Gastrocnemius medialis (tissue), 4 donors: ENCODE measurements at regions of chr11 and their contacts with region 1.

Region 1: GRCh38 chr11:7115780-7116179 is 27.0 kb downstream of the RBMXL2 start:
- DNase-seq: no peak
- ATAC-seq: no peak
- H3K4me3 ChIP-seq: no peak overlapping the region
- H3K27ac ChIP-seq: no peak overlapping the region
- H3K4me1 ChIP-seq: no peaks in the 10 kb centered on the region
- H3K27me3 ChIP-seq: no peaks in the 10 kb centered on the region
- CTCF ChIP-seq: no peak
- POLR2A ChIP-seq: no peak

Region 2: GRCh38 chr11:6855971-6856541 is 259.7 kb before region 1 on chr11:
- in situ Hi-C with region 1: no loop called
- intact Hi-C with region 1: no loop called
- DNase-seq: no peak
- ATAC-seq: no peak
- H3K4me3 ChIP-seq: no peak overlapping the region
- H3K27ac ChIP-seq: no peak overlapping the region
- H3K4me1 ChIP-seq: no peaks in the 10 kb centered on the region
- H3K27me3 ChIP-seq: no peaks in the 10 kb centered on the region
- CTCF ChIP-seq: no peak
- POLR2A ChIP-seq: no peak

Region 3: DNA sequence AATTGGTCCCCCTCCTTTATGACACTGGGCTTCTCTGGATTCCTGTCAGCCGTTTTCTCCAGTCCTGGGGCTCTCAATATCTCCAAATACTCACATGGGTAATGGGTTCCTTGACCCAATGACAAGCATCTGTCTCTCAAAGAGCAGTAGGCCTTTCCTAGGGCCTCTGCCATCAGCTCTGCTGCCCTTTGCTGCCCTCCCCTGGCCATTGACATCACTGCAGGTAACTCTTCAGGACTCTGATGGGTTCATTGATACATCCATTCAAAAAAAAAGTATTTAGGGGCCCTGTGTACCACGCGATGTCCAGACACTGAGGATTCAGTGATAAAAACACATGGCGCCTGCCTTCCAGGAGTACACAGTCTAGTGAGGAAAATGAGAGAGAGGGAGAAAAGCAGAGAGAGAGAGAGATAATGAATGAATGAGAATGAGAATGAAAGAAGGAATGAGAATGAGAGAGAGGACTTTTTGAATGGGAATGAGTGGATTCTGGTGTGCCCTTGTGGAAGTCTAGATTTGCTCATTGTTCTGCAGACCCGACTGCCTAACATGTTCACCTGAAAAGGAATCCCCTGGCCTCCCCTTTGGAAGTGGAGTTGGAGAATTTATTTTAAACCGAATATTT is 326.9 kb after region 1 on chr11:
- in situ Hi-C with region 1: loop called in 2 of 4 experiments (anchors 25 kb)
- intact Hi-C with region 1: no loop called
- DNase-seq: peak; percentile 18 to 39
- ATAC-seq: peak; percentile 51 to 87
- H3K4me3 ChIP-seq: no peak overlapping the region
- H3K27ac ChIP-seq: no peak overlapping the region
- H3K4me1 ChIP-seq: no peaks in the 10 kb centered on the region
- H3K27me3 ChIP-seq: no peaks in the 10 kb centered on the region
- CTCF ChIP-seq: peak; percentile 61 to 86 (median 66)
- POLR2A ChIP-seq: no peak

Region 4: GRCh38 chr11:7688238-7688826 is 572.6 kb after region 1 on chr11:
- in situ Hi-C with region 1: loop called in 1 of 4 experiments (anchors 25 kb)
- intact Hi-C with region 1: no loop called
- DNase-seq: no peak
- ATAC-seq: no peak
- H3K4me3 ChIP-seq: no peak overlapping the region
- H3K27ac ChIP-seq: no peak overlapping the region
- H3K4me1 ChIP-seq: peaks cover 12 to 13% of the 10 kb centered on the region in 2 donors
- H3K27me3 ChIP-seq: no peaks in the 10 kb centered on the region
- CTCF ChIP-seq: peak in 3 of 5 experiments; percentile 35 to 66 (median 60)
- POLR2A ChIP-seq: no peak